Ovary (tissue), 10 donors: ENCODE measurements at regions of chr12 and their contacts with region 1.

Region 1: GRCh38 chr12:56127888-56128669 is at the start of gene ESYT1:
- DNase-seq: peak; percentile 97 to 99 (median 98)
- H3K4me3 ChIP-seq: peak within 1 kb of the TSS; percentile 63
- H3K27ac ChIP-seq: peak within 1 kb of the TSS; percentile 78 to 90
- H3K4me1 ChIP-seq: peaks cover 9% of the 10 kb centered on the region
- H3K27me3 ChIP-seq: no peaks in the 10 kb centered on the region
- CTCF ChIP-seq: peak in 1 of 3 donors; percentile 38
- EP300 ChIP-seq: peak; percentile 48
- POLR2A ChIP-seq: peak; percentile 96
- total RNA-seq, gene ESYT1: 80.3 to 139 (median 97.3) TPM

Region 2: DNA sequence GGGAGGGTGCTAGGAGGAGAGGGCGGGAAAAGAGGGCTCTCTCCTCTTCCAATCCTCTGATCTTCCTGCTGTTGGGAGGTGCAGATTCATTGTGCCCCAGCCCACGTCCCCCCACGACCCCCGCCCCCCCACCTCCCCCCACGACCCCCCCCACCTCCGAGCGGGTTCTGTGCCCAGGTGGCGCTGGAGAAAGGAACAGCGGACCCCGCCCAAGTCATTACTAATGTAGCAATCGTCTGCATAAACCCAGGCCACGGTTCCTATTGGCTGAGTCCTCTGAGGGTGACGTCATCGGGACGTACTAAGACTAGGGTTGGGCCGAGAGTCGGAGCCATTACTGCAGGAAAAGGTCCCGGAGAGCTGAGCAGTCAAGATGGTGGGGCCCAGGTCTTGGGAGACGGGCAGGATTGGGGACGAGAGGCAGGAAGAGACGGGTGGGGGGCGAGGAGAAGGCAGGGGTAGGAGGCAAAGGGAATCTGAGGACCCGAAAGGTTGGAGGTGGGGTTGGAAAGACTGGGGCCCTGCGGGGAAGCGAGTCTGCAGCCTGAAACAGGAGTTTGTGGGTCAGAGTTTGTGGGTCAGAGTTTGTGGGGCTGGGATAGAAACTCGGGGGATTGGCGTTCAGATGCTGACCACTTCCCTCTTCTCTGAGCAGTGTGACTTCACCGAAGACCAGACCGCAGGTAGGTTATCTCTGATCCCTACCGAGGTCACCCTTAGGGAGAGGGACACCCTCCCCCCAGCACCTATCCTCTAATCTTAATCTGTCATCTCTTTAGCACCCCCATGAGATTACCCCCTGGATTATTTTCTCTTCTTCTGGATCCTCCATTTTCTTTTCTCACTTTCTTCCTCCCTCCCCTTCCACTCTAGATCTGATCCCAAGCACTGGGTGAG is 30.2 kb after region 1 on chr12 and contains the start of gene MYL6:
- intact Hi-C with region 1: loop called in 2 of 4 experiments (anchors 2 to 5 kb)
- DNase-seq: peak; percentile 93 to 98 (median 97)
- H3K4me3 ChIP-seq: peak within 1 kb of the TSS; percentile 97
- H3K27ac ChIP-seq: peak within 1 kb of the TSS; percentile 82 to 91
- H3K4me1 ChIP-seq: peaks cover 3% of the 10 kb centered on the region
- H3K27me3 ChIP-seq: no peaks in the 10 kb centered on the region
- CTCF ChIP-seq: peak in 2 of 3 donors; percentile 4 to 9
- EP300 ChIP-seq: no peak
- POLR2A ChIP-seq: peak; percentile 100
- total RNA-seq, gene MYL6: 782 to 1,485 (median 1,329) TPM

Region 3: GRCh38 chr12:56224102-56224701 is 96.1 kb after region 1 on chr12 and contains the start of gene NABP2:
- intact Hi-C with region 1: loop called in 2 of 4 experiments (anchors 10 kb)
- DNase-seq: peak; percentile 97 to 99 (median 98)
- H3K4me3 ChIP-seq: peak within 1 kb of the TSS; percentile 68
- H3K27ac ChIP-seq: peak within 1 kb of the TSS; percentile 73 to 75
- H3K4me1 ChIP-seq: peaks cover 5% of the 10 kb centered on the region
- H3K27me3 ChIP-seq: no peaks in the 10 kb centered on the region
- CTCF ChIP-seq: peak; percentile 84 to 98 (median 98)
- EP300 ChIP-seq: peak; percentile 54
- POLR2A ChIP-seq: peak; percentile 36
- total RNA-seq, gene NABP2: 19.8 to 43.7 (median 28.9) TPM

Region 4: GRCh38 chr12:56468216-56469006 is 340.3 kb after region 1 on chr12 and contains the start of gene SPRYD4:
- intact Hi-C with region 1: loop called in 2 of 4 experiments (anchors 10 kb)
- DNase-seq: peak; percentile 90 to 95 (median 93)
- H3K4me3 ChIP-seq: peak within 1 kb of the TSS; percentile 80
- H3K27ac ChIP-seq: peak within 1 kb of the TSS; percentile 60 to 78
- H3K4me1 ChIP-seq: no peaks in the 10 kb centered on the region
- H3K27me3 ChIP-seq: no peaks in the 10 kb centered on the region
- CTCF ChIP-seq: peak; percentile 8 to 51 (median 30)
- EP300 ChIP-seq: no peak
- POLR2A ChIP-seq: peak; percentile 91
- total RNA-seq, gene SPRYD4: 1.4 to 4.1 (median 3.2) TPM